GM12878 (cell line): ENCODE measurements at regions of chr2 and their contacts with region 1.

Region 1: DNA sequence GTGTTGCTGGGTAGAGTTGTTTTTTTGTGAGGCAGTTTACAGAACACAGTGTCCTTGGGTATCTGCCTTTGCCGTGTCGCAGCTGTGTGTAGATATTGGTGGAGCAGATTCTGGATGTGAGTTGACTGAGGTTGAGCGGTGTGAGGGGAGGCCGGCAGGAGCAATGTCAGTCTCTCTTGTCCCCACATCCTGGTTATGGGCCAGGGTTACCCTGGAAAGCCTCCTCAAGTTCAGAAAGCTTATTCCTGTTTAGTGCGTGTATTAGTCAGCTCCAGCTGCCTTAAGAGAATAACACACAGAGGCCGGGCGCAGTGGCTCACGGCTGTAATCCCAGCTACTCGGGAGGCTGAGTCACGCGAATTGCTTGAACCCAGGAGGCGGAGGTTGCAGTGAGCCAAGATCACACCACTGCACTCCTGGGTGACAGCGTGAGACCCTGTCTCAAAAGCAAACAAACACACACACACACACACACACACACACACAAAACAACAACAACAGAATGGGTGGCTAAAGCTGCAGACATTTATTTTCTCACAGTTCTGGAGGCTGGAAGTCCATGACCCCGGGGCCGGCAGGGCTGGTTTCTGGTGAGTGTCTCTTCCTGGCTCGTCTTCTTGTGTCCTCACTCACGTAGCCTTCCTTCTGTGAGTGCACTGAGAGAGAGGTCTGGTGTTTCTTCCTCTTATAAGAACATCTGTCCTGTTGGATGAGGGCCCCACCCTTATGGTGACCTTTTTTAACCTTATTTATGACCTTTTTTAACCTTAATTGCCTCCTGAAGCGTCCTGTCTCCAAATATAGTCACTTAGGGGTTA is 5.1 kb downstream of the NCK2 start:
- DNase-seq: no peak
- ATAC-seq: no peak
- H3K4me3 ChIP-seq: 0 out of 2 replicates have a peak overlapping the region, but pooled peaks have one; percentile 27
- H3K27ac ChIP-seq: peak overlapping the region; percentile 28
- H3K4me1 ChIP-seq: peaks cover 35% of the 10 kb centered on the region
- H3K27me3 ChIP-seq: no peaks in the 10 kb centered on the region
- CTCF ChIP-seq: no peak
- EP300 ChIP-seq: no peak
- POLR2A ChIP-seq: no peak
- RAD21 ChIP-seq: no peak

Region 2: GRCh38 chr2:105644174-105644980 is 105.4 kb before region 1 on chr2:
- CTCF ChIA-PET with region 1: no interaction called
- POLR2A ChIA-PET with region 1: no interaction called
- RAD21 ChIA-PET with region 1: no interaction called
- SMC1A ChIA-PET with region 1: no interaction called
- in situ Hi-C with region 1: no loop called
- intact Hi-C with region 1: no loop called
- DNase-seq: no peak
- ATAC-seq: no peak
- H3K4me3 ChIP-seq: no peak overlapping the region
- H3K27ac ChIP-seq: no peak overlapping the region
- H3K4me1 ChIP-seq: no peaks in the 10 kb centered on the region
- H3K27me3 ChIP-seq: no peaks in the 10 kb centered on the region
- CTCF ChIP-seq: no peak
- EP300 ChIP-seq: no peak
- POLR2A ChIP-seq: no peak
- RAD21 ChIP-seq: no peak

Region 3: DNA sequence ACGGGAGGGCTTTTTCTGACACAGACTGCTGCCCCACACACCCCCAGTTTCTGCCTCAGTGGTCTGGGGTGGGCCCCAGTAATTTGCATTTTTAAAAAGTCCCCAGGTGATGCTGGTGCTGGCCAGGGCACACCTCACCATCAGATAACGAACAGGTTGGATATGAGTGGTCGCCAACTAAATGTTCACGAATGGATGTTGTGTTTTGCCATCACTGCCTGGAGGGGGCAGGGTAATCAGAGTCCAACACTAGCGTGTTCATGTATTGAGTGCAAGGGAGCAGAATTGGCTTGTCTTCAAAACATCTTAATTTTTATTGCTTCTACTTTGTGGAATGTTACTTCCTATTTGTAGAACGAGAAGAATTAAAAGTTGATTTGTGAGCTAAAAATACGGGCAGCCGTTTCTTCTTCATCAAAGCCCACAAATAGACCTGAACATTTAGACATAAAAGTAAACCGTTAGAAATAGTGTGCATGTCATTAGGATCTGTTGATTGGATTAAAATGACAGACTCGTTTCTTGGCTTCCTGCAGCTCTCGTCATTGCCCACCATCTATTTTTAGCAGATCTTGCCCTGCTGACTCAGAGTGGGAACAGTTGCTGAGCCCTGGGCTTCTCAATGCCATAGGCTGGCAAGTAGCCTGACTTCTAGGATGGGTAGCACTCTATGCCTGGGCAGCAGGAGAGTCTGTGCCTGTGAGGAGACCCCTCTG is 40.1 kb after region 1 on chr2:
- CTCF ChIA-PET with region 1: interaction called, 7 read pairs
- POLR2A ChIA-PET with region 1: interaction called, 4 read pairs
- RAD21 ChIA-PET with region 1: interaction called, 4 read pairs
- SMC1A ChIA-PET with region 1: interaction called, 21 read pairs
- in situ Hi-C with region 1: no loop called
- intact Hi-C with region 1: no loop called
- DNase-seq: peak; percentile 74
- ATAC-seq: peak; percentile 93
- H3K4me3 ChIP-seq: peak overlapping the region; percentile 29; the same call in 1 of the 2 replicates
- H3K27ac ChIP-seq: peak overlapping the region; percentile 76
- H3K4me1 ChIP-seq: peaks cover 37% of the 10 kb centered on the region
- H3K27me3 ChIP-seq: no peaks in the 10 kb centered on the region
- CTCF ChIP-seq: peak; percentile 32 to 44 (median 37); a peak in 4 of 6 replicates
- EP300 ChIP-seq: no peak
- POLR2A ChIP-seq: no peak
- RAD21 ChIP-seq: peak; percentile 56

Region 4: GRCh38 chr2:105873721-105874120 is 123.9 kb after region 1 on chr2:
- CTCF ChIA-PET with region 1: interaction called, 3 read pairs
- POLR2A ChIA-PET with region 1: interaction called, 4 read pairs
- RAD21 ChIA-PET with region 1: interaction called, 16 read pairs
- SMC1A ChIA-PET with region 1: interaction called, 16 read pairs
- in situ Hi-C with region 1: no loop called
- intact Hi-C with region 1: loop called (anchors 5 kb)
- DNase-seq: peak; percentile 71
- ATAC-seq: peak; percentile 97
- H3K4me3 ChIP-seq: no peak overlapping the region
- H3K27ac ChIP-seq: peak overlapping the region; percentile 63
- H3K4me1 ChIP-seq: peaks cover 27% of the 10 kb centered on the region
- H3K27me3 ChIP-seq: no peaks in the 10 kb centered on the region
- CTCF ChIP-seq: peak in 1 of 3 experiments; percentile 5; a peak in 1 of 6 replicates
- EP300 ChIP-seq: peak; percentile 70 to 92; a peak in 3 of 4 replicates
- POLR2A ChIP-seq: peak; percentile 52; the same call in 1 of the 2 replicates
- RAD21 ChIP-seq: peak; percentile 38; the same call in 1 of the 2 replicates

Region 5: GRCh38 chr2:106085181-106085940 is 335.6 kb after region 1 on chr2:
- CTCF ChIA-PET with region 1: interaction called, 22 read pairs
- POLR2A ChIA-PET with region 1: no interaction called
- RAD21 ChIA-PET with region 1: interaction called, 5 read pairs
- SMC1A ChIA-PET with region 1: interaction called, 9 read pairs
- in situ Hi-C with region 1: no loop called
- intact Hi-C with region 1: loop called (anchors 1 kb)
- DNase-seq: no peak
- ATAC-seq: peak; percentile 89
- H3K4me3 ChIP-seq: no peak overlapping the region
- H3K27ac ChIP-seq: no peak overlapping the region
- H3K4me1 ChIP-seq: no peaks in the 10 kb centered on the region
- H3K27me3 ChIP-seq: no peaks in the 10 kb centered on the region
- CTCF ChIP-seq: peak; percentile 34 to 46 (median 42); a peak in 4 of 6 replicates
- EP300 ChIP-seq: no peak
- POLR2A ChIP-seq: no peak
- RAD21 ChIP-seq: peak; percentile 52; the same call in 1 of the 2 replicates